ENCODE measurements at regions of chr5 and their contacts with region 1.

Region 1: GRCh38 chr5:136037001-136037705 is 8.4 kb downstream of the TGFBI start:
- DNase-seq: peak; percentile 58
- H3K4me3 Mint-ChIP-seq: no peak overlapping the region
- H3K27ac Mint-ChIP-seq: peak overlapping the region; percentile 69
- H3K4me1 Mint-ChIP-seq: peaks cover 66% of the 10 kb centered on the region
- H3K27me3 Mint-ChIP-seq: no peaks in the 10 kb centered on the region
- CTCF ChIP-seq: no peak

Region 2: DNA sequence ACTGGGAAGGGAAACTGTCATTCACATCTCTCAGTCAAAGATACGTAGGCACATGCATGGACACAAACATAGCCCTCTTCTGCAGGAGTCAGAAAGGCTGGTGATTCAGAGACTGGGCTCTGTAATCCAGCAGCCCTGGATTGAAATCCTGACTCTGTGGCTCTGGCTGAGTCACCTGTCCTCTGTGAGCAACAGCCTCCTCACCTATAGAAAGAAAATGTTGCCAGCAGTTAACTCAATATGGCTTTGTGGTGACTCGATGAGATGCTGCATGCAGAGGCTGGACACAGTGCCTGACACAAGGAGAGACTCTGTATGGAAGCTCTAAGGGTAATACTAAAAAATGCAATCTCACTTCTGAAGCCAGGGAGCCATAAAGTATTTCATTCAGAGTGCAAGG is 1601.6 kb before region 1 on chr5:
- CTCF ChIA-PET with region 1: no interaction called
- intact Hi-C with region 1: no loop called
- DNase-seq: no peak
- H3K4me3 Mint-ChIP-seq: no peak overlapping the region
- H3K27ac Mint-ChIP-seq: peak overlapping the region; percentile 80
- H3K4me1 Mint-ChIP-seq: peaks cover 61% of the 10 kb centered on the region
- H3K27me3 Mint-ChIP-seq: no peaks in the 10 kb centered on the region
- CTCF ChIP-seq: no peak

Region 3: DNA sequence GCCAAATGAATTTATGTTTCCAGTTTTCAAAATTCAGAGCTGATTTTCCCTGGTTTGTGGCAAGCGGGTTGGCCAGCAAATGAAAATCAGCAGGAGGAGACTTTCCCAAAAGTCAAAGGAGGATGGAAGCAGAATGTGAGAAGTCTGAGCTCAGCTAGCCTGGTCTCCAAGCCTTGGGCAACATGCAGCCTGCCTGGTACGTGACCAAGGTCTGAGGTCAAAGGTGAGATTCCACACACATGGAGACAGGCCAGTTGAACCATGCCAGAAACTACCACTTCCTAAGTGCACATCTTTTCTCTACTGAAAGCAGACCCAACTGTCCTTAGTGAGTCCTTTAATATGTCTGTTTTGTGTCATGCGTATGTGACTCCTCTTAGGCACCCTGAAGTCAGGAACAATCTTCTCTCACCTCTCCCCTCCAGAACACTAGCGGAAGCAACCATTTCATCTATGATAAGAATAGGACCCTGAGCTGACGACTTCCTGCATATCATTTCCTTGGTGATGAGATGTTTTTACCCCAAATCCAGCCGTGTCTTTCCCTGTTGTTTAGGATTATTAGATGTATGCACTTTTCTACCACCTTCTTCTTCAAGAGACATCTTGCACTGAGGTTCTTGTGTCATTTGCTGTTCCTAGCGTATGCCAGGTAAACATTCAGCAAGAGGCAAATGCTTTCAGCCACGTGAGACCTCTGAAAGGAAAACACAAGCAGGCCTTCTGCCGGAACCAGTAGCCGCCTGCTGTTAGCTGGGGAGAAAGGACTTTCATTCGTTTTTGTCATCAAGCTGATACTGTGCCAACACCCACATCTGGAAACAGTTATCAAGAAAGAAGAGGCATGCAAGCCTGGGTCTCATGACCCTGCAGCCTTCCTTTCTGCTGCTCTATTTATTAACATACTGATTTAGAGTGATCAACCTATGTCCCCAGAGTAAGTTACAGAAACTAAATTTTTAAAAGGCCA is 18.1 kb before region 1 on chr5:
- CTCF ChIA-PET with region 1: interaction called, 3 read pairs
- intact Hi-C with region 1: loop called (anchors 2 kb)
- DNase-seq: no peak
- H3K4me3 Mint-ChIP-seq: no peak overlapping the region
- H3K27ac Mint-ChIP-seq: peak overlapping the region; percentile 88
- H3K4me1 Mint-ChIP-seq: peaks cover 86% of the 10 kb centered on the region
- H3K27me3 Mint-ChIP-seq: no peaks in the 10 kb centered on the region
- CTCF ChIP-seq: no peak

Measured in Calu3 (cell line).